ENCODE measurements at regions of chr1 and their contacts with region 1.

Region 1: DNA sequence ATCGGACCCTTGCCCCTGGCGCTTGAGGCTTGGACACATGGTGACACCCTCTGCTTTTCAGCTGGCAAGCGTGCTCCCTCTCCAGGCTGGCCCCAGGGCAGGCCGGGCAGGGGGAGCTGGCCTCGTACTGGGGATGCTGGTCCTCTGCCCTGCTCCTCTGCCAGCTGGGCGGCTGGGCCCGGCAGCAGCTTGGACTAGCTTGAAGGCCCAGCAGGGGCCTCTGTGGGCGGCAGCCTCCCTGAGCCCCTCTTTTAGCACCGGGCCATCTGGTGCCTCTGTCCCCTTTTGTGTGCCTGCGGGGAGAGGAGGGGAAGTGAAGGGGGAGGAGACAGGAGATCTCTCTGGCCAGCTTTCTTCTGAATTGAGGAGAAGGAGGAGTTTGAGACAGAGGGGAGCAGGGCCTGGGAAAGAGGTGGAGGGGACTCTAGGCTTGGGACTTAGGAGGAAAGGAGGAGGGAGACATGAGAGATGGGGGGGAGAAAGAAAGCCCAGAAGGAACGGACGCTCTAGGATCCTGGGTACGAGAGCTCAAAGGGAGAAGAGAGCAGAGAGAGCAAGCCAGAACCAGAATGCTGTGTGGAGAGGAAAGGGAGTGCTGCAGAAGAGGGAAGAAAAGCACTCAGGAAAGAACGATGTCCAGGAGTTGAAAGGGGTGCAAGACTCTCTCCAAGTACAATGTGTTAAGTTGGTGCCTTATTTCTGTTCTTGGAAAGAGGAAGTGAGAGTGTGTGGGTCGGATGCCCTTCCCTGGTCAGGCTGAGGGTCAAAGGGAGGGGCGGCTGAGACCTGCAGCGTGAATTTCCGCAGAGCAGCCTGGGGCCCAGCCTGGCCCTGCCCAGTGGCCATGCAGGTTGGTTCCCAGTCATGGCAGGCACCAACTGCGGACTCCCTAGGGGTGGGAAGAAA is 40.3 kb downstream of the IER5 start:
- DNase-seq: peak; percentile 70
- CTCF ChIP-seq: no peak

Region 2: GRCh38 chr1:181105134-181106021 is 23.5 kb before region 1 on chr1:
- CTCF ChIA-PET with region 1: interaction called, 36 read pairs
- POLR2A ChIA-PET with region 1: interaction called, 8 read pairs
- DNase-seq: peak; percentile 94
- CTCF ChIP-seq: no peak

Region 3: DNA sequence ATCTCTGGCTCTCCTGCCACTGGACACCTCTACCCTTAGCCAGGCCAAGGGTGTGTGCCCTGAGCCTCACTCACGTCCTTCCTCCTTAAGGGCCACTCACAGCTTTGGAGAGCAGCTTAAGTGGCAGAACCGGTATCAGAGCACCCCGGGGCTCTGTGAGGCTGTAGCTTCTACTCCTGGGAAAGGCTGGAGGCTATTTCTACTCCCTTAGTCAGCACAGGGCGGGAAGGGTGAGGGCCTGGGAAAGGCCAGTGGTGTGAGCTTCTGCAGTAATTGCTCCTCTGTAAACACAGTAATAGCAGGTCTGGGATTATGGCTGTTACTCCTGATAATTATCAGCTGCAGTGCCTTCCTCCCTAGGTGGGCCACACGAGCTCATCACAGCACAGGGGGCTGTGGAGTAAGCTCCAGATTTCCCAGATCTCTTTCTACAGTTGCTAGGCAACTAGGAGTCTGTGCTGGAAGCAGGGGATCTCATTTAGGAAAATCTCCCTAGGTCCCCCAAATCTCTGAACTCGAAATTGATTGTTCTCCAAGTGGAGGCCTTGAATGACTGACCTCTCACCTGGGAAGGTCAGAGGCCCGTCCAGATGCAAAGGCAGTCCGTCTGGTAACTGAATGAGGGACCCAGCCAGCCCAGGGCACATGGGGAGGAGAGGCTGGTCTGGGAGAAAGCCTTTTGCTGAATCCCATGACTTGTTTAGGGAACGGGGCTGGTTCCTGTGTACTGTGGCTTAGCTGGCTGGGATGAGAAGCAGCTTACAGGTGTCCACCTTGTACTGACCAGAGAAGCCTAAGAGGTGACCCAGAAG is 11.0 kb before region 1 on chr1:
- CTCF ChIA-PET with region 1: interaction called, 24 read pairs
- POLR2A ChIA-PET with region 1: no interaction called
- DNase-seq: no peak
- CTCF ChIP-seq: no peak

Region 4: GRCh38 chr1:181219938-181220337 is 91.1 kb after region 1 on chr1:
- CTCF ChIA-PET with region 1: no interaction called
- POLR2A ChIA-PET with region 1: no interaction called
- DNase-seq: no peak
- CTCF ChIP-seq: no peak

Region 5: GRCh38 chr1:181284978-181285377 is 156.1 kb after region 1 on chr1:
- CTCF ChIA-PET with region 1: no interaction called
- POLR2A ChIA-PET with region 1: no interaction called
- DNase-seq: no peak
- CTCF ChIP-seq: no peak